CD4-positive, alpha-beta memory T cell (primary cell): ENCODE measurements at regions of chr5 and their contacts with region 1.

Region 1: DNA sequence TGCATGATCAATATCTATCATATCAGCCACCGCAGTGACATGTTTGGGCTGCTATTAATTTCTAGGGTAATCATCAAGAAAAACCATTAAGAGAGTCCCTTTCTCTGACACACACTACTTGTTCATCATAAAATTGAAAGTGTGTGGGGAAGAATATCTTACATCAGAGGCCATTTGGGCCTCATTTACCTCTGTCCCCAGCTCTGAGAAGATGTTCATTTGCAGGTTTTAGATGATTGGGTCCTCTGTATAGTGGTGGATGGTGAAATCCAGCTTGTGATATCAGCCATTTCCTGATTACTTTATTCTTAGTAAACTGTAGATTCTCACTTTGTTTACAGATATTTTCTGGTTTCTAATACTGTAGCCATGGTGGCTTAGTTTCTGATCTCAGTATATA is 29.8 kb upstream of the PJA2 start:
- DNase-seq: no peak
- H3K4me3 ChIP-seq: no peak overlapping the region
- H3K4me3 Mint-ChIP-seq: no peak overlapping the region
- H3K27ac ChIP-seq: no peak overlapping the region
- H3K27ac Mint-ChIP-seq: no peak overlapping the region
- H3K4me1 ChIP-seq: no peaks in the 10 kb centered on the region
- H3K4me1 Mint-ChIP-seq: no peaks in the 10 kb centered on the region
- H3K27me3 ChIP-seq: no peaks in the 10 kb centered on the region
- H3K27me3 Mint-ChIP-seq: no peaks in the 10 kb centered on the region

Region 2: DNA sequence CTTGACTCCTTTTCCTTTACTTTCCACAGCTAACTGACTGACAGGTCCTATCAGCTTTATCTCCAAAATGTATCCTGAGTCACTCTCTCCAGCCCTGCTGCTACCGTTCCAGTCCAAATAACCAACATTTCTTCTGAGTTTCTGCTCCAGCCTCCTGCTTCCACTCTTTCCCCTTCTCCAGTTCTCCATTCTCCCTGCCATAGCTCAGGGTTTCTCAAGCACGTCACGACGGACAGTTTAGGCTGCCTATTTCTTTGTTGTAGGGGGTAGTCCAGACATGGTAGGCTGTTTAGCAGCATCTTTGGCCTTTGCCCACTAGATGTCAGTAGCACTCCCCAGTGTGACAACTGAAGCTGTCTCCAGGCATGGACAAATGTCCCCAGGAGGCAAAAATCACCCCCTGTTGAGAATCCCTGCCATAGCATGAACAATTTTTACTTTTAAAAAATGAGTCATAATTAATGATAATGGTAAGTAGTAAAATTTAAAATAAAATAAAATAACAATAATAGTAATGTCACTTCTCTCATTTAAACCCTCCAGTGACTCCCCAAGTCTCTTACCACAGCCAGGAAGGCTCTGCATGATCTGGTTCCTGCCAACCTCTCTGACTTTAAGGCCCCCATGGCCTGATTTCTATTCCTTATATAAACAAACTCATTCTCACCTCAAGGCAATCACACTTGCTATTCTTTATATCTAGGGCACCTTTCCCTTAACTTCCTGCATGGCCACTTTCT is 797.3 kb before region 1 on chr5:
- CTCF ChIA-PET with region 1: interaction called, 4 read pairs
- POLR2A ChIA-PET with region 1: no interaction called
- intact Hi-C with region 1: loop called (anchors 1 kb)
- DNase-seq: peak; percentile 28 to 58 (median 43)
- H3K4me3 ChIP-seq: no peak overlapping the region
- H3K4me3 Mint-ChIP-seq: peak overlapping the region in 1 of 8 donors; percentile 37
- H3K27ac ChIP-seq: no peak overlapping the region
- H3K27ac Mint-ChIP-seq: peak overlapping the region in 2 of 7 donors; percentile 5 to 31
- H3K4me1 ChIP-seq: no peaks in the 10 kb centered on the region
- H3K4me1 Mint-ChIP-seq: peaks cover 0 to 4% (median 3%) of the 10 kb centered on the region in 4 donors
- H3K27me3 ChIP-seq: no peaks in the 10 kb centered on the region
- H3K27me3 Mint-ChIP-seq: peaks cover 1 to 11% of the 10 kb centered on the region in 2 donors

Region 3: GRCh38 chr5:108919591-108920326 is 519.8 kb before region 1 on chr5:
- CTCF ChIA-PET with region 1: interaction called, 9 read pairs
- POLR2A ChIA-PET with region 1: no interaction called
- intact Hi-C with region 1: loop called (anchors 1 kb)
- DNase-seq: peak in 1 of 5 donors; percentile 6
- H3K4me3 ChIP-seq: no peak overlapping the region
- H3K4me3 Mint-ChIP-seq: no peak overlapping the region
- H3K27ac ChIP-seq: no peak overlapping the region
- H3K27ac Mint-ChIP-seq: no peak overlapping the region
- H3K4me1 ChIP-seq: no peaks in the 10 kb centered on the region
- H3K4me1 Mint-ChIP-seq: peaks cover 0 to 5% (median 4%) of the 10 kb centered on the region in 4 donors
- H3K27me3 ChIP-seq: no peaks in the 10 kb centered on the region
- H3K27me3 Mint-ChIP-seq: no peaks in the 10 kb centered on the region

Region 4: DNA sequence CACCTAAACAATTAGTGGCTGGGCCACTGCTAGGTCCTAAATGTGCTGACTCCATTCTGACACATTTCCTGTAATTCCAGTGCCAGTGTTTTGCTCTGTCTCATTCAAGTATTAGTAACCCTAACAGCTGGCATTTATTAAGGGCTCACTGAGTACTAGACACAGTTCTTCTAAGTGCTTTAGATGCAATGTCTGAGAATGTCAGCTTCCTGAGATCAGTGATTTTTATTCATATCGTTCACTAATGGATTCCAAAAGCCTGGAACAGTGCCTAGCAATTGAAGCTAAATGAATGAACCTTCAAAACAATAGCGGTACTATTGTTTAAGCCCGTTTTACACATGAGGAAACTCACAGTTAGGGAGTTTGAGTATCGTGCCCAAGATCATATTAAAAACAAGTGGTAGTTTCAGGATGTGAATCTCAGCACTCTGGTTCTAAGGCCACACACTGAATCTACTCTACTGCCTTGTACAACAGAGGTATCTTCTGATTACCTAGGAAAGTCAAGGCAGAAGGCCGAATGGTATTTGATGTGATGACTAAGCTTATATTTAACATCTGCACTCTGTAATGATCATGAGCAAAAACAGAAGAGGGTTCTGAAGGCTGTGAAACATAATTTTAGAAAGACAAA is 333.8 kb before region 1 on chr5:
- CTCF ChIA-PET with region 1: no interaction called
- POLR2A ChIA-PET with region 1: no interaction called
- intact Hi-C with region 1: no loop called
- DNase-seq: no peak
- H3K4me3 ChIP-seq: no peak overlapping the region
- H3K4me3 Mint-ChIP-seq: no peak overlapping the region
- H3K27ac ChIP-seq: no peak overlapping the region
- H3K27ac Mint-ChIP-seq: no peak overlapping the region
- H3K4me1 ChIP-seq: no peaks in the 10 kb centered on the region
- H3K4me1 Mint-ChIP-seq: no peaks in the 10 kb centered on the region
- H3K27me3 ChIP-seq: no peaks in the 10 kb centered on the region
- H3K27me3 Mint-ChIP-seq: no peaks in the 10 kb centered on the region

Region 5: DNA sequence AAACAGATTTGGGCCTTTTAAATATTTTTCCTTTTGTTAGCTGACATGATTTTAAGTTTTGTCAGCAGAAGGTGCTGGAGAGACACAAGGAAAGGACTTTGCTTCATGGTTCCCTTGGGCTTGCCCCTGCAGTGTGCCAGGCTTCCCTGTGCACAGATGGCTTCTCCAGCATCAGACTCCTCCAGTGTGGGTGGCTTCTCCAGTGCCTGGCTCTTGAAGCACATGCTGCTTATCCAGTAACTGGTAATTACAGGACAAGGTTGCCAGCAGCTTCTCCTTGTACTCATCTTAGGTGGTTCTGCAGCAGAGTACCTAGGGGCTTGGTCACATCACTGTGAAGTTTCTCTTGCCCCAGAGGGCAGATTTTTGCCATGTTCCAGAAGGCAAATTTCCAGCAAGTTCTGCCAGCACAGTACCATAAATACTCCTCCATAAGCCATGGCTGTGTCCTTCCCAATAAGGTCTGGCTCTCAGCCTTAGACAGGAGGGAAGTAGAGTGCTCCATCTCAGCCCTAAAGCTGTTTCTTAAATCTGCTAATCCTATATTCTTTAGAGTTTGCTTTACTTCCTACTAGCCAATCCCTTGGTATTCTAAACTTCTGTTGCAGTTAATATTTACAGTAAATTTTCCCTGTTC is 92.2 kb before region 1 on chr5:
- CTCF ChIA-PET with region 1: interaction called, 3 read pairs
- POLR2A ChIA-PET with region 1: no interaction called
- intact Hi-C with region 1: loop called (anchors 2 kb)
- DNase-seq: no peak
- H3K4me3 ChIP-seq: no peak overlapping the region
- H3K4me3 Mint-ChIP-seq: no peak overlapping the region
- H3K27ac ChIP-seq: no peak overlapping the region
- H3K27ac Mint-ChIP-seq: peak overlapping the region in 5 of 7 donors; percentile 9 to 75 (median 47)
- H3K4me1 ChIP-seq: no peaks in the 10 kb centered on the region
- H3K4me1 Mint-ChIP-seq: peaks cover 10 to 23% (median 17%) of the 10 kb centered on the region in 4 donors
- H3K27me3 ChIP-seq: no peaks in the 10 kb centered on the region
- H3K27me3 Mint-ChIP-seq: no peaks in the 10 kb centered on the region

Region 6: GRCh38 chr5:110625376-110625999 is 1185.9 kb after region 1 on chr5:
- CTCF ChIA-PET with region 1: no interaction called
- POLR2A ChIA-PET with region 1: no interaction called
- intact Hi-C with region 1: loop called (anchors 5 kb)
- DNase-seq: peak in 3 of 5 donors; percentile 19 to 35 (median 26)
- H3K4me3 ChIP-seq: no peak overlapping the region
- H3K4me3 Mint-ChIP-seq: no peak overlapping the region
- H3K27ac ChIP-seq: no peak overlapping the region
- H3K27ac Mint-ChIP-seq: no peak overlapping the region
- H3K4me1 ChIP-seq: no peaks in the 10 kb centered on the region
- H3K4me1 Mint-ChIP-seq: no peaks in the 10 kb centered on the region
- H3K27me3 ChIP-seq: no peaks in the 10 kb centered on the region
- H3K27me3 Mint-ChIP-seq: peaks cover 2 to 4% of the 10 kb centered on the region in 2 donors